ENCODE measurements at regions of chr1 and their contacts with region 1.

Region 1: DNA sequence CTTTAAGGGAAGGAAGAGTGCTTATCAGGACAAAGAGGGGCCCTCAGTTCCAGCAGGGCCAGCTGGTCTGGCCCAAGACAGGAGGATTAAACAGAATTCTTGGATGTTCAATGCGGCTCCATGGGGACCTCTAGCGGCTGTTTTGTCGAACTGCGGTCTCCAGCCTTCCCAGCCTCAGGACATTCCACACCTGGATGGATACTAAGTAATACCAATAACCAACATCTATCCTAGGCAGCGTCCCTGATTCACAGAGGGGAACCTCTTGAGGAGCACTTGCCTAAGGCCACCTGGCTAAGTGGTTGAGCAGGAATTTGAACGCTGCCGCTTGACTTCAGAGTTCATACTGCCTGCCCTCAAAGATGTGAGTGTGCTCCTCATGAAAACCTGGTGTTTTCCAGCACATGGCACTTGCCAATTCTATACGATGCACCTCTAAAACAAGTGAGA is 15.5 kb upstream of the CD247 start:
- DNase-seq: peak; percentile 50
- ATAC-seq: peak; percentile 65 to 88 (median 86)
- H3K4me3 ChIP-seq: no peak overlapping the region
- H3K27ac ChIP-seq: peak overlapping the region in 1 of 10 donors; percentile 22
- H3K4me1 ChIP-seq: peaks cover 0 to 13% (median 7%) of the 10 kb centered on the region in 9 donors
- H3K27me3 ChIP-seq: no peaks in the 10 kb centered on the region
- CTCF ChIP-seq: peak; percentile 86 to 95 (median 92)

Region 2: GRCh38 chr1:167263819-167264464 is 269.9 kb before region 1 on chr1:
- intact Hi-C with region 1: loop called in 8 of 10 experiments (anchors 2 to 10 kb)
- DNase-seq: no peak
- ATAC-seq: peak in 2 of 8 donors; percentile 16 to 49
- H3K4me3 ChIP-seq: no peak overlapping the region
- H3K27ac ChIP-seq: peak overlapping the region in 1 of 10 donors; percentile 3
- H3K4me1 ChIP-seq: peaks cover 0 to 62% (median 44%) of the 10 kb centered on the region in 9 donors
- H3K27me3 ChIP-seq: no peaks in the 10 kb centered on the region
- CTCF ChIP-seq: no peak

Region 3: GRCh38 chr1:167409183-167409582 is 124.7 kb before region 1 on chr1:
- intact Hi-C with region 1: loop called in 6 of 10 experiments (anchors 5 to 10 kb)
- DNase-seq: no peak
- ATAC-seq: no peak
- H3K4me3 ChIP-seq: no peak overlapping the region
- H3K27ac ChIP-seq: no peak overlapping the region
- H3K4me1 ChIP-seq: peaks cover 0 to 4% (median 0%) of the 10 kb centered on the region in 9 donors
- H3K27me3 ChIP-seq: no peaks in the 10 kb centered on the region
- CTCF ChIP-seq: no peak

Region 4: DNA sequence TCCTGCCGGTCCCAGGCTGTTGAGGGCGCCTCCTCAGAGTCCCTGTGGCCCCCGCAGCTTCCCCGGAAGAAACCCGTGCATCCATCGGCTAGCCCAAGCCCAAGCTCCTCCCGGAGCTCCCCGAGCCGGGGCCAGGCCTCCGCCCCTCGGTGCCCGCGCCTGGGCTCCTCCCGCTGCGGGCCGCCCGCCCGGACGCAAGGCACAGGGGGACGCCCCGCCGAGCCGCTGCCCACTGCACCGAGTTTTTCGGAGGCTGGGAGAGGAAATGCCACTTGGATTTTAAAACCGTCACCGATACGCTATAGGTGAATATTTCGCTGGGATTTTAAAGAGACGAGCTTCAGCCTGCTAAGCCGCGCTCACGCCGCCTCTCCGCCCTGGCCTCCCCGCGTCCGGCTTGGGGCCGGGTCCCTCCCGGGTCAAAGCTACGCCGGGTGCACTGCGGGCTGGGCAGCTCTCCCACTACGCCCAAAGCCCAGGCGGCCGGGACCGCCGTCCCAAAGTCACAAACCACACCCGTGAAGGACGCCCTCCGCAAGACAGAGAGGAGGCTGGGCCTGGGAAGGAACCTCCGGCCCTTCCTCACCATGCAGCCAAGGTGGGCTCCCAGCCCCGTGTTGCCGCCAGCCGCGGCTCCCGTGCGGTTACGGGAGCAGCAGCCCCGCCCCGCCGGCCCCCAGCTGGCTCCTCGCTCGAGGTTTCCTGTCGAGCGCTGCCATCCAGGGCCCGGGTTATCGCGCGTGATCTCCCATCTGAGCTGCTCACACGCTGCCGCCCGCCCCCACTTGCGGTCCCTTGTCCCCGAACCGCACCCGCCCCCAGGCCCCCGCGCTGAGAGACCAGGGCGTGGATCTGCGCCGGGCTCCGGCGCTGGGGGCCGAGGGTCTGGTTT is 78.7 kb before region 1 on chr1:
- intact Hi-C with region 1: loop called in 4 of 10 experiments (anchors 5 to 10 kb)
- DNase-seq: peak; percentile 36 to 70
- ATAC-seq: peak; percentile 81 to 93 (median 82)
- H3K4me3 ChIP-seq: peak overlapping the region; percentile 61 to 97 (median 74)
- H3K27ac ChIP-seq: peak overlapping the region; percentile 67 to 92 (median 85)
- H3K4me1 ChIP-seq: peaks cover 0 to 15% (median 9%) of the 10 kb centered on the region in 9 donors
- H3K27me3 ChIP-seq: peaks cover 0 to 5% (median 0%) of the 10 kb centered on the region in 7 donors
- CTCF ChIP-seq: no peak

Region 5: GRCh38 chr1:167467126-167467710 is 66.7 kb before region 1 on chr1:
- intact Hi-C with region 1: loop called in 2 of 10 experiments (anchors 5 to 10 kb)
- DNase-seq: no peak
- ATAC-seq: no peak
- H3K4me3 ChIP-seq: no peak overlapping the region
- H3K27ac ChIP-seq: no peak overlapping the region
- H3K4me1 ChIP-seq: peaks cover 0 to 5% (median 0%) of the 10 kb centered on the region in 9 donors
- H3K27me3 ChIP-seq: no peaks in the 10 kb centered on the region
- CTCF ChIP-seq: no peak

Region 6: GRCh38 chr1:167563579-167564246 is 29.8 kb after region 1 on chr1:
- intact Hi-C with region 1: no loop called
- DNase-seq: peak in 1 of 2 donors; percentile 30
- ATAC-seq: peak; percentile 17 to 83 (median 69)
- H3K4me3 ChIP-seq: no peak overlapping the region
- H3K27ac ChIP-seq: peak overlapping the region in 1 of 10 donors; percentile 61
- H3K4me1 ChIP-seq: peaks cover 0 to 49% (median 25%) of the 10 kb centered on the region in 9 donors
- H3K27me3 ChIP-seq: no peaks in the 10 kb centered on the region
- CTCF ChIP-seq: no peak

Measured in heart right ventricle (tissue), 16 donors.